ENCODE measurements at regions of chr2 and their contacts with region 1.

Region 1: GRCh38 chr2:104834431-104835153 is 19.3 kb upstream of the POU3F3 start:
- DNase-seq: no peak
- H3K4me3 Mint-ChIP-seq: no peak overlapping the region
- H3K27ac Mint-ChIP-seq: no peak overlapping the region
- H3K4me1 Mint-ChIP-seq: no peaks in the 10 kb centered on the region
- H3K27me3 Mint-ChIP-seq: peaks cover 25% of the 10 kb centered on the region

Region 2: GRCh38 chr2:104872866-104873688 is 38.5 kb after region 1 on chr2:
- CTCF ChIA-PET with region 1: no interaction called
- intact Hi-C with region 1: loop called (anchors 5 kb)
- DNase-seq: peak; percentile 73
- H3K4me3 Mint-ChIP-seq: peak overlapping the region; percentile 62
- H3K27ac Mint-ChIP-seq: no peak overlapping the region
- H3K4me1 Mint-ChIP-seq: peaks cover 9% of the 10 kb centered on the region
- H3K27me3 Mint-ChIP-seq: peaks cover 72% of the 10 kb centered on the region